ENCODE measurements at regions of chr11 and their contacts with region 1.

Region 1: GRCh38 chr11:118907051-118908042 is 18.4 kb downstream of the BCL9L start:
- DNase-seq: no peak
- H3K4me3 ChIP-seq: peak overlapping the region in 1 of 4 donors; percentile 7
- H3K27ac ChIP-seq: peak overlapping the region; percentile 73 to 100 (median 85)
- H3K4me1 ChIP-seq: peaks cover 51 to 77% (median 53%) of the 10 kb centered on the region in 3 donors
- H3K27me3 ChIP-seq: no peaks in the 10 kb centered on the region
- CTCF ChIP-seq: peak; percentile 87 to 98 (median 96)
- POLR2A ChIP-seq: no peak

Region 2: DNA sequence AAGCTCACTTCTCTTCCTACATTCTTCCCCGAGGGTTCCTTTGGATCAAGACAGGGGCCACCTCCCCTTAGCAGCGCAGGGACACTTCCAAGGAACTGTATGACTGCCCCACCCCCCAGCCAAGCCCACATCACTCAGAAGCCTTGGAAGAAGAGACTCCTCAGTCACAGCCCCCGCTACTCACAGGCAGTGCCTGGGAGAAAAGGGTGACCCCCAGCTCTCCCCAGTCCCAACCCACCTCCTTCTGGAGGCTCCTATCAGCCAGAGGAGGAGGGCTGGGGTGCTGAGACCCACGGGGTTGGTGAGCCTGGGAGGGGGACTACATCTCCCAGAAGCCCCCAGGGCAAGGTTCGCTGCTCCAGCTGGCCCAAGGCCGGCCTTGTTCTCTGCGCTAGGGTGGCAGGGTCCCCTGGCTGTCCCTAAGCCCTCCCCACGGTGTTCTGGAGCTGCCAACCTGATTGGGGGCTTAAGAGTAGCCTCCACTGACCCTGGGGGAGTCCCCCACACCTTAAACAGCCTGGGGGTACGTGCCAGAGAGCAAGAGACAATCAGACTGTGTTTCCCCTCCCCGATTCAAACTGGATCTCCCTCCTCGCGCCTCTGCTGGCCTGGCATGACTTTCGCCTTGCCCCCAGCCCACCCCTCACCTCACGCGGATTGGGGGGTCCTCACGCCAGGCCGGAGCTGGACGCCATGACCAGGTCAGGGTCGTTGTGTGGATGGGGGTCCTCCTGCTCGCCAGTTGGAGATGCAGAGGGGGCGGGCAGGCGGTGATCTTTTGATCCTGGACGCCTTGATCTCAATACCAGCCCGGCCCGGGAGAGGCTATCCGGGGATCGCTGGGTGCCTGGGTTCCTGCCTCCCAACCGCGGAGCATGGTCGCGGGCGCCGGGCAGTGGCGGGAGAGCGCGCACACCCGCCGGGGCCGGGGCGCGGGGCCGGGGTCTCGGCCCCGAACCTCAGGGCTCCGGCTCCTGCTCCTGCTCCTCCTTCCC is 17.5 kb after region 1 on chr11:
- intact Hi-C with region 1: loop called (anchors 2 kb)
- DNase-seq: no peak
- H3K4me3 ChIP-seq: peak overlapping the region; percentile 78 to 92 (median 90)
- H3K27ac ChIP-seq: peak overlapping the region; percentile 95 to 100 (median 98)
- H3K4me1 ChIP-seq: peaks cover 60 to 77% (median 69%) of the 10 kb centered on the region in 3 donors
- H3K27me3 ChIP-seq: no peaks in the 10 kb centered on the region
- CTCF ChIP-seq: no peak
- POLR2A ChIP-seq: peak in 1 of 4 donors; percentile 41

Region 3: DNA sequence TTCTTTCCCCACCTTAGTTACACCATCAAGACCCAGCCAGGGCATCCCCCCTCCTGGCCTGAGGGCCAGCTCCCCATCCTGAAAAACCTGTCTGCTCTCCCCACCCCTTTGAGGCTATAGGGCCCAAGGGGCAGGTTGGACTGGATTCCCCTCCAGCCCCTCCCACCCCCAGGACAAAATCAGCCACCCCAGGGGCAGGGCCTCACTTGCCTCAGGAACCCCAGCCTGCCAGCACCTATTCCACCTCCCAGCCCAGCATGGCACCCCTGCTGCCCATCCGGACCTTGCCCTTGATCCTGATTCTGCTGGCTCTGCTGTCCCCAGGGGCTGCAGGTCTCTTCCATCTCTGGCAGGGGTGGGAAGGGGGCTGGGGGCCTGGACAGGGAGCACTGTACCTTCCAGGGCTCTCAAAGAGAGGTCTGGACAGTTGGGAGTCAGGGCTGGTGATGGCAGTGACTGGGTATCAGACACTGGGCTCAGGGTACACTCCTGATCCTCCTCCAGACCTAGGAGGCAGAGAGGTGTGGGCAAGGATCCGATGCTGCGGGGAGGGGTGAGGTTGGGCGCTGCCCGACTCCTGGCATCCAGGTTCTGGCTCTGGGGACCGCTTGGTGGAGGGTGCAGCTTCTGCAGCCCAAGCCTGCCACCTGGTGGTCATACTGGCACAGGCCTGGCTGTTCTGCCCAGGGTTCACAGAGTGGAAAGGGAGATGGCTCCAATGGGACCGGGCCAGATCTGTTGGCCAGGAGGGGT is 48.9 kb after region 1 on chr11 and contains the start of gene UPK2:
- intact Hi-C with region 1: loop called (anchors 10 kb)
- DNase-seq: peak; percentile 14
- H3K4me3 ChIP-seq: no peak within 1 kb of the TSS
- H3K27ac ChIP-seq: no peak within 1 kb of the TSS
- H3K4me1 ChIP-seq: peaks cover 0 to 11% (median 0%) of the 10 kb centered on the region in 3 donors
- H3K27me3 ChIP-seq: peaks cover 0 to 30% (median 0%) of the 10 kb centered on the region in 4 donors
- CTCF ChIP-seq: peak; percentile 80 to 98 (median 96)
- POLR2A ChIP-seq: no peak
- total RNA-seq, gene UPK2: 0.57 TPM in 1 of 4 donors, not detected in the others

Region 4: DNA sequence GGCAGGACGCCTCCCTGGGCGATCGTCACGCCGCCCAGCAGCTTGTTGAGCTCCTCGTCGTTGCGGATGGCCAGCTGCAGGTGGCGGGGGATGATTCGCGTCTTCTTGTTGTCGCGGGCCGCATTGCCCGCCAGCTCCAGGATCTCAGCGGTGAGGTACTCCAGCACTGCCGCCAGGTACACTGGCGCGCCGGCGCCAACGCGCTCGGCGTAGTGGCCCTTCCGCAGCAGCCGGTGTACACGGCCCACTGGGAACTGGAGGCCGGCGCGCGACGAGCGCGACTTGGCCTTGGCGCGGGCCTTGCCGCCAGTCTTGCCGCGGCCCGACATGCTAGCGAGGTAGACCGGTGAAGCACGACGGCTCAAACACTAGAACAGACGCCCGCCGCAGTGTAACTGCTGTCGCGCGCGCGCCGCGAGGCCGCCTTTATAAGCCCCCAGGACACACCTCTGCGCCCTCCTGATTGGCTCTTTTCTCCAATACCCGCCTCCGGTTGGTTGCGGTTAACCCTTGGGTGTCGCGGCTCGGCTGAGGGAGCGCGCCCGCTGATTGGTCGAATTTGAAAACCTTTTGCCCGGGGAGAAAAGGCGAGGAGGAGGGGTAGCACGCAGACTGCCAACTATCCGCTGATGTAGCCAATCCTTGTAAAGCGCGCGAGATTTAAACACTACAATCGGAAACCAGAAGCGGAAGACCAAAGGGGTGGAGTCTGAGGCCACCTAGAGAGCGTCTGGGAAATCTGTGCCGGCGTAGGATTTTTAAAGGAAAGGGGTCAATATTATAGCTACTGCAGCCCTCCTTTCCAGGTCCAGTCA is 187.9 kb after region 1 on chr11:
- intact Hi-C with region 1: no loop called
- DNase-seq: peak; percentile 97
- H3K4me3 ChIP-seq: peak overlapping the region; percentile 73 to 93 (median 86)
- H3K27ac ChIP-seq: peak overlapping the region; percentile 90 to 97 (median 96)
- H3K4me1 ChIP-seq: peaks cover 15 to 46% (median 24%) of the 10 kb centered on the region in 3 donors
- H3K27me3 ChIP-seq: no peaks in the 10 kb centered on the region
- CTCF ChIP-seq: peak in 2 of 6 experiments; percentile 3 to 24
- POLR2A ChIP-seq: peak in 2 of 4 donors; percentile 98 to 99

Region 5: DNA sequence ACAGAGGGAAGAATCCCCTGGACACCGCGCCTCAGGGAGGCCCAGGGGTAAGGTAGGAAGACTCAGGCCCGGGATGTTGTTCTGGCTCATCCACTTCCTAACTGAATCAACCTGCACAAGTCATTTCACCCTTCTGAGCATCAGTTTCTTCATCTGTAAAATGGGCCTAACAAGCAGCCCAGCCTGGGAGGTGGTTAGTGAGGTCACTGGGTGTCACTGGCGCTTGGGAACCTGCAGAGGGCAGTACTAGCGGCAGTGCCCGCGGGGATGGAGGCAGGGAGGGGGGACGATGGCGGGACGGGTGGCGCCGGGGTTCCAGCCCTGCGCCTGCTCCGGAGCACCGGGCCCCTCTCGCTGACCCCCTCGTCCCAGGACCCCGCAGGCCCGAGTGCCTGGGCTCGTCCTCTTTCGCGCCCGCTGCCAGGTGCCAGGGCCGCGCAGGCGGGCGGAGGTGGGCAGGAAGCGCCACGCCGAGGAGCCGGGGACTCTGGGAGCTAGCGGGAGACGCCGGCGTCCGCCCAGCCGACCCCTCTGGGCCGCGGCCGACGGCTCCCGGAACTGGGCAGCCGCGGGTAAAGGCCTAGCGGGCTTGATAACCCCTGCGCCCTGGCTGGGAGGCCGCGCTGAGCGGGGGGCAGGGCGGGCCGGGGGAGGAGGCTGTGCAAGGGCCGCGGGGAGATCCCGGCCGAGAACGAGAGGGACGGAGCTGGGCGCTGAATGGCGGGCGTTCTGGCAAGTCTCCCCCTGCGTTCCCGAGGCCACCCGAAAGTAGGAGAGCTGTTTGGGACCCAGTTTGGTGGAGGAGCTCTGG is 261.3 kb after region 1 on chr11 and contains the start of gene NLRX1:
- intact Hi-C with region 1: no loop called
- DNase-seq: peak; percentile 41
- H3K4me3 ChIP-seq: peak within 1 kb of the TSS; percentile 65 to 98 (median 85)
- H3K27ac ChIP-seq: peak within 1 kb of the TSS; percentile 94 to 99 (median 98)
- H3K4me1 ChIP-seq: peaks cover 11 to 63% (median 26%) of the 10 kb centered on the region in 3 donors
- H3K27me3 ChIP-seq: no peaks in the 10 kb centered on the region
- CTCF ChIP-seq: peak; percentile 68 to 95 (median 82)
- POLR2A ChIP-seq: peak in 2 of 4 donors; percentile 87 to 88
- total RNA-seq, gene NLRX1: 31.5 to 83.3 (median 67.5) TPM